ENCODE measurements at regions of chr2 and their contacts with region 1.

Region 1: GRCh38 chr2:54704688-54705605 is 18.5 kb upstream of the EML6 start:
- DNase-seq: no peak
- H3K4me3 ChIP-seq: no peak overlapping the region
- H3K27ac ChIP-seq: peak overlapping the region; percentile 27
- H3K4me1 ChIP-seq: peaks cover 18% of the 10 kb centered on the region
- H3K27me3 ChIP-seq: peaks cover 6% of the 10 kb centered on the region
- CTCF ChIP-seq: peak; percentile 74

Region 2: DNA sequence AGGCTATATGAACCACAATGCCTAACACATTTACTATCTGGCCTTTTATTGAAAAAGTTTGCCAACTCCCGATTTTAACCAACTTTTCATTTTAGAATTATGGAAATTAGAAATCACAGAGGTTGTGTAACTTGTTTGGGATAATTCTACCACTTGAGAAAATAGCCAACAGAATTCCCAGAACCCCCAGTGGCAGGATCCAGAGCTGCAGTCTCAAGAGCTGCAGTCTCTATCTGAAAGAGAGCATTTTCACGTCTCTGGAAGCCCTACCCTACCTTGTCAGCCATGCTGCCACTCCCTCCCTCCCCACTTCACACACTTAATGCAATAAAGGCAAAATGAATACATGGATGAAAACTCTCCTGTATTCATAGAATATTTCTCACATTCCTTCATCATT is 425.6 kb before region 1 on chr2:
- intact Hi-C with region 1: no loop called
- DNase-seq: no peak
- H3K4me3 ChIP-seq: no peak overlapping the region
- H3K27ac ChIP-seq: no peak overlapping the region
- H3K4me1 ChIP-seq: peaks cover 6% of the 10 kb centered on the region
- H3K27me3 ChIP-seq: no peaks in the 10 kb centered on the region
- CTCF ChIP-seq: peak; percentile 36

Region 3: GRCh38 chr2:54522624-54523281 is 182.2 kb before region 1 on chr2:
- intact Hi-C with region 1: loop called (anchors 10 kb)
- DNase-seq: no peak
- H3K4me3 ChIP-seq: no peak overlapping the region
- H3K27ac ChIP-seq: peak overlapping the region; percentile 83
- H3K4me1 ChIP-seq: peaks cover 99% of the 10 kb centered on the region
- H3K27me3 ChIP-seq: no peaks in the 10 kb centered on the region
- CTCF ChIP-seq: peak; percentile 71

Region 4: DNA sequence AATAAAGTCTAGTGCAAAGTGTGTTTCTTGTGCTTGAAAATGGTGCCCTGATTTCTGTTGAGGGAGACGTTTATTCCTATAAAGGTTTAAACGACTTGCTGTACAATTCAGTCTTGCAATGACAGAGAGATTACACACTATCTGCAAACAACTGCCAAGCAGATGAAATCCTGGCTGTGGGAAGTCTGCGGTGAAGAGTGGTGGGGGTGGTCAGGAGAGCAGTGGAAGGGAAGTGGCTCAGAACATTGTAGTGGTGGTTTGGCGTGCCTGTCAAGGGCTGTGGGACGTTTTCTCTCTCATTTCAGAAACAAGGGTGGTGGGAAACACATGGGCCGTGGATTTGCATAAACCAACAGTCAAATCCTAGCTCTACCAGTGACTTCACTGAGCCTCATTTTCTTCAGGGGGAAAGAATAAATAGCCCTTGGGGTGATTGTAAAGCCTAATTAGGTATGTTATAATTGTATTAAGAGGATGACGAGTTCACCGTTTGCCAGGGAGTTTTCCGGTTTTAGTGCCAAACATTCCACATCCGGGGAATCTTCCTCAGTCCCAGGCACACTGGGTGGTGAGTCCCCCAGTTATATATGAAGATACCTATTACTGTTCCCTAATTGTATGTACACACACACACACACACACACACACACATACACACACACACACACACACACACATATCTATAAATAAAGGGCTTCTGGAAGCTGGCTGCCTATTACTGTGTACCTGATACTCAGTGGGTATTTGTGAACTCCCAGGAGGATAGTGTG is 133.8 kb before region 1 on chr2:
- intact Hi-C with region 1: no loop called
- DNase-seq: peak; percentile 45
- H3K4me3 ChIP-seq: no peak overlapping the region
- H3K27ac ChIP-seq: peak overlapping the region; percentile 75
- H3K4me1 ChIP-seq: peaks cover 98% of the 10 kb centered on the region
- H3K27me3 ChIP-seq: no peaks in the 10 kb centered on the region
- CTCF ChIP-seq: no peak

Region 5: DNA sequence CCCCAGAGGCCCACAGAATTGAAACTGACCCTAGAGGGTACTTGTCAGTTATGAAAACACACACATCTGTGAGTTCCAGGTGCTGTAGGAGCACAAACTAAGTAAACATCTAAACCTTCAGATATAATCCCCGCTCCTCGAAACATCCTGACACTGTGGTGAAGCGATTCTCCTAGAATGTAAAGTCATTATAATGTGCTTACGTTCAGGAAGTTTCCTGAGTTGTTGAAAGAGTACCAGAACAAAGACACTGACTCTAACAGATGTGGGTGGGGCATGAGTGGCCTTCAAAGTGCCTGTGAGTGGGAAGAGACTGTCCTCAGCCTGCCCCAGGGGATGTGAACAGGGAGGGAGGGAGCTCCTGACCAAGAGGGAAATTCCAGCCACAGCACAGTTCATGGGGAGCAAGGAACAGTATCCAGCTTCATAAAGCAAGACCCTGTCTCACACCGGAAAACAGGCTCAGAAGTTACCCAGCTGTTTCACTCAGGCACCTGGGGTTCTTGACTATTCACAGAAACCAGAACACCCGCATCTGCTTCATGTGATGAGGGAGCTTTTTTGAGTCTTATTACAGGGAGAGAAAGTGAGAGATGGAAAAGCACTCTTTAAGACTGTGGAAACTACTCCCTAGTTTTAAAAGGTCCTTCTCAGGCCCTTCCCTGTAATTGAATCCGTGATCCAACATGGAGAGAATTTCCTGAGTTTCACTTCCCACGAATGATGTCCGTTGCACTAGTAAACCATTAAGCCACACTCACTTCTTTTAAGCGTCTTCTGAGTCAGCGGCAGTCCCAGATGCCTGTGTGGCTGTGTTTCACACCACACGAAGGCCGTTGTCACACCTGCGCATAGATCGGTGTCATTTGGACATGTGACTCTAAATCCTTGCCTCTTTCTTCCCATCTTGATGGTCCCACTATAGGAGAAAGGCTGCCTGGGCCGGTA is 70.1 kb before region 1 on chr2:
- intact Hi-C with region 1: loop called (anchors 10 kb)
- DNase-seq: peak; percentile 66
- H3K4me3 ChIP-seq: peak overlapping the region; percentile 42
- H3K27ac ChIP-seq: peak overlapping the region; percentile 90
- H3K4me1 ChIP-seq: peaks cover 100% of the 10 kb centered on the region
- H3K27me3 ChIP-seq: no peaks in the 10 kb centered on the region
- CTCF ChIP-seq: no peak

Region 6: DNA sequence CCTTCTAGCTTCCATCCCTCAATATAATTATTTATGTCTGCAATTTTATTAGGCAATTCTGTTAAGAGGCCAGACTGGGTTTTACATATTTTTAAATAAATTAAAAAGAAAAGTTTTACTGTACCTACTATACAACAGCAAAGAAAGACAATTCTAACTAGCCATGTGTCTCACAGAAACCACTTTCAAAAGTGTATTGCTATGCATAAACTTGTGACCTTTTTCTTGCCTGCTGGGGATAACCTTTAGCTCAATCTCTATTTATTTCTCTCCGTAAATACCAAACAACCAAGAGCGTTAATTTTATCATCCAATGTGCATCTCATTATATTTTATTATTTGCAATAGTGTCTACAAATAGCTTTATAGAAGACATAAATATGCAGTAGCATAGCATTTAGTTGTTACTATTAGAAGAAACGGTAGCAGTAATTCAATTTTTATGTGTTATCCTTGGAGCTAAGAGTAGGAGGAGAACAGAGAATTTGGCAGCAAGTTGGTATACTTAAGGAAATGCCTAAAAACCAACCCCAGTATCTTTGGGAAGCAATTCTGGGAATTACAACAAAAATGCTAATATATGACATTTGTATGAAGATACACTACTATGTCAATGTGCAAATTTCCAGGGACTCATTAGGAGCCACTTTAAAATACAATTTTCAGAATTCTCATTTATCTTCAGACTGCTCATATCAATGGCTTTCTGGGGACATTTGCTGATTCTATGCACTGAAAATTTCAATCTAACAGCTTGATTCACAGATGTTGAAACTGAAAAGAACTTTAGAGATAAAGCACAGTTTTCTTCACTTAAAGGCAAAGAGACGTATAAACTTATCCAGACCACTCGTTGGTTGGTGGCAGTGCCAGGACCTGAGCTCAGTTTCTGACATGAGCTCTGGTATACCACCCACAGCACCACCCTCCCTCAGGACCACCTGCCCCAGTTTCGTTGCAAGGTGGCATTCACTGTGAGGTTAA is 368.3 kb after region 1 on chr2:
- intact Hi-C with region 1: no loop called
- DNase-seq: no peak
- H3K4me3 ChIP-seq: no peak overlapping the region
- H3K27ac ChIP-seq: no peak overlapping the region
- H3K4me1 ChIP-seq: peaks cover 5% of the 10 kb centered on the region
- H3K27me3 ChIP-seq: no peaks in the 10 kb centered on the region
- CTCF ChIP-seq: no peak

Measured in left ventricle myocardium inferior (tissue), 1 donor.